Thyroid gland (tissue), 4 donors: ENCODE measurements at regions of chr11 and their contacts with region 1.

Region 1: DNA sequence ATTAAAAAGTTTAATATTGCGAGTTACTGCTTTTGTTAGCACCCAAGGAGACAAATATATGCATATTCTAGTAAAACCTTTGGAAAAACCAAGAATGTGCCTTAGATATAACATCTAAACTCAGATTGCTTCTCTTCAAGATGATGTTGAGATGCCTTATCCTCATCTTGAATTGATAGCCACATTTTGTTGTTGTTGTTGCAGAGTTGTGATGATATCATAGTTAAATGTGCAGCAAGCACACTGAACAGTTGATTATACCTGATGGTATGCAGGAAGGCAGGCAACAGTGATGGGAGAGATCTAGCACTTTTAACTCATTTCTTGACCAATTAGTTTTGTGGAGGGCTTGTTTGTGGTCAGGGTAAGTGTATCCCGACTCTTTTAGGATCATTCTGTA is 48.0 kb downstream of the KDM2A start:
- DNase-seq: no peak
- H3K4me3 ChIP-seq: no peak overlapping the region
- H3K27ac ChIP-seq: no peak overlapping the region
- H3K4me1 ChIP-seq: peaks cover 6 to 19% of the 10 kb centered on the region in 2 donors
- H3K27me3 ChIP-seq: no peaks in the 10 kb centered on the region
- CTCF ChIP-seq: no peak
- POLR2A ChIP-seq: no peak

Region 2: DNA sequence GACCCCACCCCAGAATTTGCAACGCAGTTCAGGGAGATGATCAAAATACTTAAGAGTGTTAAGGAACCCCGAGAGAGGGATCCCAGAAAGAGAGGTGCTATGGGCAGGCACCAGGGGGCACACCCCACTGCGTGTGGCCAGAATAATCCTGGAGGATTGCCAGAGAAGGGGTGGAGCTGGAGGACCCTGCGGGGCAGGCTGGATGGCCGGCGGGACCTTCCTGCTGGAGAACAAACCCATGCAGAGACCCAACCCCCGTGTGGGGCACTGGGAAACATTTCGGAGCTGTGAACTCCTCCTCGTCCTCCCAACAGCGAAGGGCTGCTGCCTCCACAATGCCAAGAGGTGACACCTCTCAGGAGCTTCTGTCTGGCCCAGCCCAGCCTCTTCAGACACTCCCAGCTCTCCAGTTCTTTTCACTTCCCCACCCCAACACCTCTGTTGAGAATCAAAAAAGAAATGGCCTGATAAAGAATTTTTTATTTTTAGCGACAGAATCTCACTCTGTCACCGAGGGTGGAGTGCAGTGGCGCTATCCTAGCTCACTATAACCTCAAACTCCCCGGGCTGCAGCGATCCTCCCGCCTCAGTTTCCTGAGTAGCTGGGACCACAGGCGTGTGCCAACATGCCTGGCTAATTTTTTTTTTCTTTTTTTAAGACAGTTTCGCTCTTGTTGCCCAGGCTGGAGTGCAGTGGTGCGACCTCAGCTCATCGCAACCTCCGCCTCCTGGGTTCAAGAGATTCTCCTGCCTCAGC is 84.9 kb before region 1 on chr11:
- intact Hi-C with region 1: loop called (anchors 5 kb)
- DNase-seq: peak; percentile 30
- H3K4me3 ChIP-seq: no peak overlapping the region
- H3K27ac ChIP-seq: no peak overlapping the region
- H3K4me1 ChIP-seq: peaks cover 10 to 12% of the 10 kb centered on the region in 2 donors
- H3K27me3 ChIP-seq: no peaks in the 10 kb centered on the region
- CTCF ChIP-seq: no peak
- POLR2A ChIP-seq: no peak

Region 3: DNA sequence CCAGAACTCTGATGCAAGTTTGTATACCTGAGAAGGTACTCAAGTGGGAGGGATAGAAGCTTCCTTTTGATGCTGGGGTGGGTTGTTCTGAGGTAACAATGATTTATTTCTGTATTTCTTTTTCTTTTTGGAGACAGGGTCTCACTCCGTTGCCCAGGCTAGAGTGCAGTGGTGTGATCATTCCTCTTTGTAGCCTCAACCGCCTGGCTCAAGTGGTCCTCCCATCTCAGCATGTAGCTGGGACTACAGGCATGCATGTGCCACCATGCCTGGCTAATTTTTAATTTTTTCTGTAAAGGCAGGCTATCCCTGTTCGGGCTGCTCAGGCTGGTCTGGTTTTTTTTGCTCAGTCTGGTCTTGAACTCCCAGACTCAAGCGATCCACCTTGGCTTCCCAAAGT is 40.1 kb before region 1 on chr11:
- intact Hi-C with region 1: no loop called
- DNase-seq: peak; percentile 58 to 68
- H3K4me3 ChIP-seq: no peak overlapping the region
- H3K27ac ChIP-seq: peak overlapping the region in 1 of 3 donors; percentile 26
- H3K4me1 ChIP-seq: peaks cover 15 to 33% of the 10 kb centered on the region in 2 donors
- H3K27me3 ChIP-seq: no peaks in the 10 kb centered on the region
- CTCF ChIP-seq: no peak
- POLR2A ChIP-seq: no peak